Thyroid gland (tissue), 4 donors: ENCODE measurements at regions of chr5 and their contacts with region 1.

Region 1: GRCh38 chr5:90131383-90132133 is 278.0 kb downstream of the CETN3 start:
- DNase-seq: no peak
- H3K4me3 ChIP-seq: no peak overlapping the region
- H3K27ac ChIP-seq: no peak overlapping the region
- H3K4me1 ChIP-seq: no peaks in the 10 kb centered on the region
- H3K27me3 ChIP-seq: no peaks in the 10 kb centered on the region
- CTCF ChIP-seq: no peak
- POLR2A ChIP-seq: no peak

Region 2: GRCh38 chr5:90264689-90265544 is 133.4 kb after region 1 on chr5:
- intact Hi-C with region 1: loop called (anchors 5 kb)
- DNase-seq: peak; percentile 52 to 69
- H3K4me3 ChIP-seq: no peak overlapping the region
- H3K27ac ChIP-seq: no peak overlapping the region
- H3K4me1 ChIP-seq: no peaks in the 10 kb centered on the region
- H3K27me3 ChIP-seq: no peaks in the 10 kb centered on the region
- CTCF ChIP-seq: peak; percentile 75 to 94 (median 84)
- POLR2A ChIP-seq: no peak

Region 3: GRCh38 chr5:90518661-90519060 is 387.1 kb after region 1 on chr5:
- intact Hi-C with region 1: no loop called
- DNase-seq: no peak
- H3K4me3 ChIP-seq: no peak overlapping the region
- H3K27ac ChIP-seq: no peak overlapping the region
- H3K4me1 ChIP-seq: no peaks in the 10 kb centered on the region
- H3K27me3 ChIP-seq: no peaks in the 10 kb centered on the region
- CTCF ChIP-seq: no peak
- POLR2A ChIP-seq: no peak